ENCODE measurements at regions of chr4 and their contacts with region 1.

Region 1: DNA sequence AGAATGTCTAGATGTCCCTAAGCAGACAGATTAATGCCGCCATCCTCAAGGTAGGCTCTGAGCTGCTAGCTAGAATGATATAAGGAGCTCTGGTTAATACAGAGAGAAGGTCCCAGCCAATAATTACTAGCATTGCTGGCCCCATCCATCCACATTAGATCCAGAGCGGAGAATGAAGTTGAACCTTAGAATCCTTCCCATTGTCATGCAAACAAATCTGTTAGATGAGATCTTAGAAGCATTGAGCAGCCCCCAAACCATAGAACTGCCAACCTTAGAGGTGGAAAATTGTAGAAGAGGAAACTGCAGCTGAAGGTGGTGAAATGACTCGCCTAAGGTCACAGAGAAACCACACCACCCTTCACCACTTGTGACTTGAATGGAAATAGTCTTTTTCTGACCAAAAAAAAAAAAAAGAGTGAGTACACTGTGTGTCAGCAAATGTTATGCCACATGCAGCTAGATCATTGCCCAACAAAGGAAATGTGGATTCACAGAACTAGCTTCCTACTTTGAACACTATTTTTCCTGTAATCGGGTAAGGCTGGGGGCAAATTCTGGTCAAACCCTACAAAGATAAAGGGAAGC is 162.1 kb downstream of the SMIM20 start:
- DNase-seq: no peak
- ATAC-seq: peak; percentile 54
- H3K4me3 Mint-ChIP-seq: no peak overlapping the region
- H3K27ac Mint-ChIP-seq: peak overlapping the region; percentile 57
- H3K4me1 Mint-ChIP-seq: peaks cover 30% of the 10 kb centered on the region
- H3K27me3 Mint-ChIP-seq: no peaks in the 10 kb centered on the region
- CTCF ChIP-seq: no peak

Region 2: DNA sequence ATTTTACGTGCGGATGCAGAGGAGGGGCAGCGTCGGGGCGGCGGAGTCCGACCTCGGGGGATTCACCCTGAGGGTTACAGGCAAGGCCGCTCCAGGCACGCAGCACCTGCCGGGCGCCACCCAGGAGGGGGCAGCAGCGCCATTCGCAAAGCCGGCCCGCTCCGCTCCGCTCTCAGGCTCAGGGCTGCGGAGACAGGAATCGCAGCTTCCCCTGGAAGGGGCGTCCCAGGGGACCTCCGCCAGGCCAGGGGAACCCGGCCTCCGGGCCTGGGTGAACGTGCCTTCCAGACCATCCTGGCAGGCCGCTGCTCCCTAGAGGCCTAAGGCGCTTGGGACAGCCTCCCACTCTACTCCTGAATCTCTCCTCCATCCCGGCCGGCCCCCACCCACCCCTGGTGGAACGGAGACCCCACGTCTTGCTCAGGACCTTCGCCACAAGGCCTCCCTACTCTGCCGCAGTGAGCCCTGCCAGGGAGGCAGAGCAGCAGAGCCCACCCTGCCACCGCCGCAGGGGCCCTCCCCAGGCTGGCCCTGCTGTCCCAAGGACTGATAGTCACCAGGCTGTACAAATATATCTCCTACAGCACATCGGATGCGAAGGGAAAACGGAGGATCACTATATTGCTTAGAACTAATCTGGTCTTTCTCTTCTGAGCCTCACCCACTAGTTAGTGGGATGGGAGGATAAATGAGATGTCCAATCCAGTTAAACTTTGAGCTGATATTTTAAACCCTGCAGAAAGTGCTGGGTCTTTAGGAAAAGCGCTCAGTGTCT is 47.1 kb before region 1 on chr4:
- CTCF ChIA-PET with region 1: no interaction called
- POLR2A ChIA-PET with region 1: no interaction called
- intact Hi-C with region 1: loop called (anchors 2 kb)
- DNase-seq: peak; percentile 55
- ATAC-seq: peak; percentile 92
- H3K4me3 Mint-ChIP-seq: no peak overlapping the region
- H3K27ac Mint-ChIP-seq: no peak overlapping the region
- H3K4me1 Mint-ChIP-seq: peaks cover 2% of the 10 kb centered on the region
- H3K27me3 Mint-ChIP-seq: peaks cover 13% of the 10 kb centered on the region
- CTCF ChIP-seq: no peak

Region 3: DNA sequence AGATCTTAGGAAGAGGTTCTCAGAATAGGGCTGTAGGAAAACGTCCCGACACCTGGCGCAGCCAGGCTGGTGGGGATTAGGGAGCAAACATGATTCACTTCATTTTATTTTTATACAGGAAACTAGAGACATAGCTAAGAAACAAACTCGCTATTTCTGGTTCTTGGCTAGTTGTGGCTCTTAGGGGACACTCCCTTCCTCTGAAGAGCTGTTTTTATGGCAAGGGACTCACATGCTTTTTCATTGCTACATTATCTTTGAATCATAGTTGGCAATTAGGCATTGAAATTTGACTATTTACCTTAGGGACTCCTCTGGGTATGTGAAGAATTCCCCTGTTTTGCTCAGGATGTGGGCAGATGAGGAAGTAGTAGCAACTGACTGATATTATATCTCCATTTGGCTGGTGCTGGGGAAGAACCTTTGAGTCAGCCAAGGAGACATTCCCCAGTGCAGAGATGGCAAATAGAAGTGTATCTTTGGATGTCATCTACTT is 12.4 kb after region 1 on chr4:
- CTCF ChIA-PET with region 1: interaction called, 7 read pairs
- POLR2A ChIA-PET with region 1: interaction called, 7 read pairs
- intact Hi-C with region 1: loop called (anchors 1 kb)
- DNase-seq: no peak
- ATAC-seq: peak; percentile 93
- H3K4me3 Mint-ChIP-seq: peak overlapping the region; percentile 48
- H3K27ac Mint-ChIP-seq: peak overlapping the region; percentile 79
- H3K4me1 Mint-ChIP-seq: peaks cover 24% of the 10 kb centered on the region
- H3K27me3 Mint-ChIP-seq: peaks cover 2% of the 10 kb centered on the region
- CTCF ChIP-seq: no peak

Measured in activated B cell treated with CpG ODN at 0.5 μM for 24 hours (primary cell).